ENCODE measurements at regions of chr22 and their contacts with region 1.

Region 1: GRCh38 chr22:29883045-29883774 is at the start of gene MTMR3:
- DNase-seq: peak; percentile 99
- H3K4me3 Mint-ChIP-seq: peak within 1 kb of the TSS; percentile 92
- H3K27ac Mint-ChIP-seq: peak within 1 kb of the TSS; percentile 83
- H3K4me1 Mint-ChIP-seq: peaks cover 10% of the 10 kb centered on the region
- H3K27me3 Mint-ChIP-seq: no peaks in the 10 kb centered on the region
- total RNA-seq, gene MTMR3: 21.0 and 23.9 TPM in 2 replicates

Region 2: GRCh38 chr22:29837780-29838598 is 45.2 kb before region 1 on chr22 and contains the start of gene ASCC2:
- intact Hi-C with region 1: loop called (anchors 1 kb)
- DNase-seq: peak; percentile 100
- H3K4me3 Mint-ChIP-seq: peak within 1 kb of the TSS; percentile 99
- H3K27ac Mint-ChIP-seq: peak within 1 kb of the TSS; percentile 90
- H3K4me1 Mint-ChIP-seq: peaks cover 31% of the 10 kb centered on the region
- H3K27me3 Mint-ChIP-seq: no peaks in the 10 kb centered on the region
- total RNA-seq, gene ASCC2: 78.5 and 81.3 TPM in 2 replicates

Measured in activated CD4-positive, alpha-beta T cell treated with anti-CD3 and anti-CD28 coated beads, Interleukin-2, amount 10 ng/mL, durations not matched to agents 24 days and 14 days (primary cell).